Colonic mucosa (tissue), 4 donors: ENCODE measurements at regions of chr4 and their contacts with region 1.

Region 1: GRCh38 chr4:122758033-122758432 is 25.5 kb downstream of the BBS12 start:
- DNase-seq: no peak
- H3K4me3 ChIP-seq: no peak overlapping the region
- H3K27ac ChIP-seq: no peak overlapping the region
- H3K4me1 ChIP-seq: no peaks in the 10 kb centered on the region
- H3K27me3 ChIP-seq: no peaks in the 10 kb centered on the region
- CTCF ChIP-seq: peak; percentile 75

Region 2: GRCh38 chr4:122922877-122923511 is 165.0 kb after region 1 on chr4:
- intact Hi-C with region 1: loop called (anchors 5 kb)
- DNase-seq: peak; percentile 92
- H3K4me3 ChIP-seq: peak overlapping the region; percentile 87
- H3K27ac ChIP-seq: peak overlapping the region; percentile 74
- H3K4me1 ChIP-seq: no peaks in the 10 kb centered on the region
- H3K27me3 ChIP-seq: no peaks in the 10 kb centered on the region
- CTCF ChIP-seq: no peak